Transverse colon (tissue), 4 donors: ENCODE measurements at regions of chr9 and their contacts with region 1.

Region 1: GRCh38 chr9:37913480-37914153 is 9.7 kb upstream of the SLC25A51 start:
- DNase-seq: peak; percentile 86
- H3K4me3 ChIP-seq: no peak overlapping the region
- H3K27ac ChIP-seq: no peak overlapping the region
- H3K4me1 ChIP-seq: no peaks in the 10 kb centered on the region
- H3K27me3 ChIP-seq: no peaks in the 10 kb centered on the region
- CTCF ChIP-seq: peak; percentile 95 to 98 (median 98)
- EP300 ChIP-seq: no peak
- POLR2A ChIP-seq: no peak

Region 2: DNA sequence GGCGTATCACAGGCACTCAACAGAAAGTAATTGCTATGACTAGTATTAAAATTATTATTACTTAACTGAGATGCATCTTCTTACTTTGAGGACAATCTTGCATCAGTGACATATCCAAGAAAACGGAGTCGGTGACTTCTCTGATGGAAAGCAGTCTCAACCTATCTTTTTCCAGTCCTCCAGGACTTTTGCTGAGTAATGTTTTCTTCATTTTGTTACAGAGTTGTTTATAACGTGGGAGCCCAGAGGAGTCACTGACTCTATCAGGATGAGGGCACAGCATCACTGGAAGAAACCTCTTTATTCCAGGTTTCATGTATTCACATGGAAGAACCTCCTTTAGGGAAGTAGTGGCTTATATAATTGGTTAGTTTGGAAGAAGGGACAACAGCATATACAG is 1392.5 kb before region 1 on chr9:
- in situ Hi-C with region 1: no loop called
- intact Hi-C with region 1: no loop called
- DNase-seq: no peak
- H3K4me3 ChIP-seq: no peak overlapping the region
- H3K27ac ChIP-seq: no peak overlapping the region
- H3K4me1 ChIP-seq: no peaks in the 10 kb centered on the region
- H3K27me3 ChIP-seq: no peaks in the 10 kb centered on the region
- CTCF ChIP-seq: no peak
- EP300 ChIP-seq: no peak
- POLR2A ChIP-seq: no peak

Region 3: GRCh38 chr9:37963936-37964739 is 50.5 kb after region 1 on chr9:
- in situ Hi-C with region 1: no loop called
- intact Hi-C with region 1: loop called (anchors 10 kb)
- DNase-seq: peak; percentile 52
- H3K4me3 ChIP-seq: no peak overlapping the region
- H3K27ac ChIP-seq: peak overlapping the region; percentile 66 to 88 (median 77)
- H3K4me1 ChIP-seq: peaks cover 8 to 57% (median 51%) of the 10 kb centered on the region in 4 donors
- H3K27me3 ChIP-seq: no peaks in the 10 kb centered on the region
- CTCF ChIP-seq: no peak
- EP300 ChIP-seq: no peak
- POLR2A ChIP-seq: no peak

Region 4: DNA sequence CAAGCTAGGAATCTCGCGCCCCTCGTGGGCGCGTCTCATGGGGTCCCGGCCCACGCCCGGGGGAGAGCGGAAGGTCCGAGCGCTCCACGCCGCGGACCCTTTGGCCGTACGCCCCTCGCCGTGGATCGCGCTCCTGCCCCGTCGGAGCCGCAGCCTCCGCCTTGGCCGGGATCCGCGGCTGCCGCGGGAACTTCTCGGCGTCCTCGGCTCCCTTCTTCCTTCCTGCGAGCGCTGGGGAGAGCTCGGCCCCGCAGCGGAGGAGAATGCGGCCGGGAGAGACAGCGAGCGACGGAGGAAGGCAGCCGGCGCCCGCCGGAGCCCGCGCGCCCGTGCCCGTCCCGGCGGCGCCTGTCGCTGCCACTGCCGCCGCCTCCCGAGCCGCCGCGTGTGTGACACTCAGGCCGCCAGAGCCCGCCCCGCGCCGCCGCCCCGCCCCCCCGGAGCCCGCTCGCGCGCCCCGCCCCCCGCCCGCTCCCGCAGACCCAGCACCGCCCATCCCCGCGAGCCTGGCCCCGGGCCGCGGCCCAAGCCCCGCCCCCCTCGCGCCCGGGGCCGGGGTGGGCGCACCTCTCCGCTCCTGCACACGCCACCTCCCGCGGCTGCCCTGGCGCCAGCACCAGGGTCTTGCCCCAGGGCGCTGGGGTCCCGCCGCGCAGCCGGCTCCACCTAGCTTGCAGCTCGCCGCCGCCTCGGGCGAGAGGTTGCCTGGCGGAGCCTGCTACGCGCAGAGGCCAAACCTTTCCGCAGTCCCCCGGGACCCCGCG is 155.4 kb after region 1 on chr9 and contains the start of gene SHB:
- in situ Hi-C with region 1: loop called in 1 of 4 experiments (anchors 25 kb)
- intact Hi-C with region 1: loop called (anchors 5 kb)
- DNase-seq: peak; percentile 88
- H3K4me3 ChIP-seq: peak within 1 kb of the TSS; percentile 86 to 99 (median 94)
- H3K27ac ChIP-seq: peak within 1 kb of the TSS; percentile 93 to 98 (median 98)
- H3K4me1 ChIP-seq: peaks cover 11 to 58% (median 42%) of the 10 kb centered on the region in 4 donors
- H3K27me3 ChIP-seq: no peaks in the 10 kb centered on the region
- CTCF ChIP-seq: peak in 3 of 5 experiments; percentile 36 to 71 (median 55)
- EP300 ChIP-seq: no peak
- POLR2A ChIP-seq: peak; percentile 60
- total RNA-seq, gene SHB: 11.9 to 33.7 (median 22.2) TPM

Region 5: DNA sequence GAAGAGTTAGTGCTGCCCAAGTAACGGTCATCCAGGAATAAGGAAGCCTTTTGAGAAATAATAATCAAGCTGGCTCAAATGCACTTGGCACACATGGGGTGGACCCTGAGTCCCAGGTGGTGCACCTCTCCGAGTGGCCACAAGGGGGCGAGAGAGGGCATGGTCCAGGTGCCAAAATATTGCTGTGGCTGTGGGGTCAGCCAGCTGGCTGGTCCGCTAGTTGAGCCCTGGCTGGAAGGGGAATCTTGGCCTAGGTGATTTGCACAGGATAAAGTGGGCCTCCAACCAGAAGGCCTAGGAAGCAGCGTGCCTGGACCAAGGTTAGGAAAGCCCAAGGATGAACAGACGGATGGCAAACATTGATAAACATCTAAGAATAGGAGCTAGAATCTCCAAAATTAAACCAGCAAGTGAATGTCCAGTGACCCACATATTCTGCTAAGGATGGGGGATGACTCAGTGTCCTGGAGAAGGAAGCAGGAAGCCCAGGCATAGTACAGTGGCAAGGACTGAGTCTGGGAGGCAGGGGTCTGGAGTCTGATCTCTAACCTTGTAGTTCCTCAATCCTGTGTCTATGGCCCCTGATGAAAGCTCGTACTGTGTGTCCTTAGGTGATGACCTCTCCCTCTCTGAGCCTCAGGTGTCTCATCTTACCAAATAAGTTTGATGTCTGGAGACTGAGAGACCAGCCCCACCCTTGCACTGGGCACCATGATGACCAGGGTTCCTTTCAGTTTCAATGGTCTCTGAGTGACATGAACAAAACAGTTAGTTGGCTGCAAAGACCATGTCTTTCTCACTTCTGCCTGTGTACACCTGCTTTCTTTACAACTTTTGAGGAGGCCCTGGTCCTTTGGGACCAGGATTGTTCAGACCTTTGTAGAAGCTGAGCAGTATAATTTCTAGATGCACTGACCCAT is 174.6 kb after region 1 on chr9:
- in situ Hi-C with region 1: loop called in 2 of 4 experiments (anchors 10 kb)
- intact Hi-C with region 1: loop called (anchors 5 kb)
- DNase-seq: peak; percentile 82
- H3K4me3 ChIP-seq: no peak overlapping the region
- H3K27ac ChIP-seq: no peak overlapping the region
- H3K4me1 ChIP-seq: peaks cover 0 to 3% (median 0%) of the 10 kb centered on the region in 4 donors
- H3K27me3 ChIP-seq: no peaks in the 10 kb centered on the region
- CTCF ChIP-seq: peak; percentile 90 to 99 (median 96)
- EP300 ChIP-seq: no peak
- POLR2A ChIP-seq: no peak

Region 6: DNA sequence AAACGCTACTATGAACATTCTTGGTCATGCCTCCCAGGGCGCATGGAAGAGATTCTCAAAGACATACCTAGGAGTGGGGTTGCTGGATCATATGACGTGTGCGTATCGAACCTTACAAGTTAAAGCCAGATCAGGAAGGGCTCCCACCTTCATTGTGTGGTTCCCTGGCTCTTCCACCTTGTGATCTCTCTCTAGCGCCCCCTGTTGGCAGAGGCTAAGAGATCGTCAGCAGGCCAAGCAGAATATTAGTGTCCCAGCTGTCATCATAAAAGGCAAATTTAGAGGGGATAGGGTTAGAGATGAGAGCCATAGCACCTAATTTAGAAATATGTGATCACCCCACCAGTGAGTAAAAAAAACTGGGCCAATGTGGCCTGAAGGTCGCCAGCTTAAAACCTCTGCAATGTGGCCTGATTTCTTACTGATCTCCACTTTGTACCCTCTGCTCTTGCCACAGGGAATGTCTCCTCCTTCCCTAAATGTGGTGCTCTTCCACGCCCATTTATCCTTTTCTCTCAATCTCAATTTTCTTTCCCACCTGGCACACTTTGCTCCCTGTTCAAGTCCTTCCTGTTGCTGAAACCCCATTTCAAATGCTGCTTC is 247.1 kb after region 1 on chr9:
- in situ Hi-C with region 1: loop called in 3 of 4 experiments (anchors 5 to 25 kb)
- intact Hi-C with region 1: loop called (anchors 5 kb)
- DNase-seq: peak; percentile 74
- H3K4me3 ChIP-seq: no peak overlapping the region
- H3K27ac ChIP-seq: no peak overlapping the region
- H3K4me1 ChIP-seq: no peaks in the 10 kb centered on the region
- H3K27me3 ChIP-seq: no peaks in the 10 kb centered on the region
- CTCF ChIP-seq: peak; percentile 78 to 88 (median 82)
- EP300 ChIP-seq: no peak
- POLR2A ChIP-seq: no peak

Region 7: DNA sequence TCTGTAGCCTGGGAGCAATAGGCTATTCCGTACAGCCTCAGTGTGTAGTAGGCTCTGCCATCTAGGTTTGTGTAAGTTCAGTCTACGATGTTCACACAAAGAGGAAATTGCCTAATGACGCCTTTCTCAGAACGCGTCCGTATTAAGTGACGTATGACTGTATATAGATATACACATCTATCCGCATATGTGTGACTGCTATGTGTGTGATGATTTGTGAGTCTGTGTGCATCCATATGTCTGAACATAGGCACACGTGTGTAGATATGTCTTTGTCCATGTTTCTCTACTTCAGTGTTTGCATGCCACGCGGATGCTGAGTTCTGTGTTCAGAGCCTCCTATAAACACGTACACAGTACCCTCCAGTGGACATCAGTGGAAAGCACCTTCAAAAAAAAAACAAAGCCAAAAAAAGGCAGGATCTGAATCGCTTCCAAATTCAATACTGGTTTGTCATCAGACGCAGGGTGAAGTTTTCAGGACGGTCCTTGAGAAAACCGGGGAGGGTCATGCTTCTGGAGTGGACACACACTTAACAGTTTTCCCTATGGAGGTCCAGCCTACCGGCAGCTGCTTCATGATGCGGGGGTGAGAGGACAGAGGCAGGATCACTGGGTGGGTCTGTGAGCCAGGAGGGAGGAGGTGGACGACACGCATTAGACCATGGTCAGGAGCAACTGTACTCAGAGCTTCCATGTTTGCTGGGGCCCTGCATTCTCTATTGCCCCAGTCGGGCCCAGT is 449.4 kb after region 1 on chr9:
- in situ Hi-C with region 1: loop called in 3 of 4 experiments (anchors 25 kb)
- intact Hi-C with region 1: loop called (anchors 10 kb)
- DNase-seq: peak; percentile 22
- H3K4me3 ChIP-seq: no peak overlapping the region
- H3K27ac ChIP-seq: no peak overlapping the region
- H3K4me1 ChIP-seq: peaks cover 0 to 7% (median 1%) of the 10 kb centered on the region in 4 donors
- H3K27me3 ChIP-seq: no peaks in the 10 kb centered on the region
- CTCF ChIP-seq: peak; percentile 38 to 55 (median 46)
- EP300 ChIP-seq: no peak
- POLR2A ChIP-seq: no peak